ENCODE measurements at regions of chr19 and their contacts with region 1.

Region 1: GRCh38 chr19:39187559-39187957 is 9.2 kb upstream of the NCCRP1 start:
- DNase-seq: no peak
- H3K4me3 ChIP-seq: no peak overlapping the region
- H3K27ac ChIP-seq: no peak overlapping the region
- H3K4me1 ChIP-seq: peaks cover 0 to 3% of the 10 kb centered on the region in 2 experiments; a peak in 1 of 4 replicates
- H3K27me3 ChIP-seq: no peaks in the 10 kb centered on the region
- CTCF ChIP-seq: no peak; the same call in 1 of the 2 replicates
- EP300 ChIP-seq: no peak
- RAD21 ChIP-seq: no peak

Region 2: DNA sequence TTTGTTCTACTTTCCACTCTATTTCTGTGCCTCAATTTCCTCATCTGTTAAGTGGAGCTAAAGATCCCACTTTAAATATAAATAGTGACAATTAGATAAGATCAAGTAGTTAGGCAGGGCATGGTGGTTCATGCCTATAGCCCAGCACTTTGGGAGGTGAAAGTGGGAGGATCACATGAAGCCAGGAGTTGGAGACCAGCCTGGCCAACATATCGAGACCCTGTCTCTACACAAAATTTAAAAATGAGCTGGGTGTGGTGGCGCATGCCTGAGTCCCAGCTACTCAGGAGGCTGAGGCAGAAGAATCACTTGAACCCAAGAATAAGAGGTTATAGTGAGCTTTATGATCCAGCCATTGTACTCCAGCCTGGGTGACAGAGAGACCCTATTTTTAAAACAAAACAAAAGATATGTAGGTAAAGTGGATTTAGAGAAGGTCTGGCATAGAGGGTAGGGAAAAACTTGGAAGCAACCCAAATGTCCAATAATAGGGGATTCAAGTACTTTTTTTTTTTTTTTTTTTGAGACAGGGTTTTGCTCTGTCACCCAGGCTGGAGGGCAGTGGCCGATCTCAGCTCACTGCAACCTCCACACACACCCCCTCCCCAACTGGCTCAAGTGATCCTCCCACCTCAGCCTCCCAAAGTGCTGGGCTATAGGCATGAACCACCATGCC is 67.9 kb before region 1 on chr19:
- CTCF ChIA-PET with region 1: interaction called, 36 read pairs
- POLR2A ChIA-PET with region 1: no interaction called
- DNase-seq: no peak
- H3K4me3 ChIP-seq: no peak overlapping the region
- H3K27ac ChIP-seq: no peak overlapping the region
- H3K4me1 ChIP-seq: no peaks in the 10 kb centered on the region
- H3K27me3 ChIP-seq: no peaks in the 10 kb centered on the region
- CTCF ChIP-seq: no peak
- EP300 ChIP-seq: no peak
- RAD21 ChIP-seq: no peak

Region 3: GRCh38 chr19:39138221-39139211 is 49.0 kb before region 1 on chr19:
- CTCF ChIA-PET with region 1: interaction called, 13 read pairs
- POLR2A ChIA-PET with region 1: no interaction called
- DNase-seq: peak; percentile 29
- H3K4me3 ChIP-seq: no peak overlapping the region
- H3K27ac ChIP-seq: peak overlapping the region in 1 of 2 experiments; percentile 96; a peak in 2 of 4 replicates
- H3K4me1 ChIP-seq: peaks cover 9 to 36% of the 10 kb centered on the region in 2 experiments; a peak in 3 of 4 replicates
- H3K27me3 ChIP-seq: no peaks in the 10 kb centered on the region
- CTCF ChIP-seq: no peak
- EP300 ChIP-seq: no peak
- RAD21 ChIP-seq: no peak

Region 4: GRCh38 chr19:39144245-39145071 is 43.1 kb before region 1 on chr19:
- CTCF ChIA-PET with region 1: interaction called, 16 read pairs
- POLR2A ChIA-PET with region 1: no interaction called
- DNase-seq: peak; percentile 80
- H3K4me3 ChIP-seq: no peak overlapping the region
- H3K27ac ChIP-seq: peak overlapping the region in 1 of 2 experiments; percentile 82; a peak in 2 of 4 replicates
- H3K4me1 ChIP-seq: peaks cover 2 to 43% of the 10 kb centered on the region in 2 experiments; a peak in 3 of 4 replicates
- H3K27me3 ChIP-seq: no peaks in the 10 kb centered on the region
- CTCF ChIP-seq: no peak
- EP300 ChIP-seq: peak in 1 of 2 experiments; percentile 39; a peak in 1 of 4 replicates
- RAD21 ChIP-seq: no peak

Region 5: DNA sequence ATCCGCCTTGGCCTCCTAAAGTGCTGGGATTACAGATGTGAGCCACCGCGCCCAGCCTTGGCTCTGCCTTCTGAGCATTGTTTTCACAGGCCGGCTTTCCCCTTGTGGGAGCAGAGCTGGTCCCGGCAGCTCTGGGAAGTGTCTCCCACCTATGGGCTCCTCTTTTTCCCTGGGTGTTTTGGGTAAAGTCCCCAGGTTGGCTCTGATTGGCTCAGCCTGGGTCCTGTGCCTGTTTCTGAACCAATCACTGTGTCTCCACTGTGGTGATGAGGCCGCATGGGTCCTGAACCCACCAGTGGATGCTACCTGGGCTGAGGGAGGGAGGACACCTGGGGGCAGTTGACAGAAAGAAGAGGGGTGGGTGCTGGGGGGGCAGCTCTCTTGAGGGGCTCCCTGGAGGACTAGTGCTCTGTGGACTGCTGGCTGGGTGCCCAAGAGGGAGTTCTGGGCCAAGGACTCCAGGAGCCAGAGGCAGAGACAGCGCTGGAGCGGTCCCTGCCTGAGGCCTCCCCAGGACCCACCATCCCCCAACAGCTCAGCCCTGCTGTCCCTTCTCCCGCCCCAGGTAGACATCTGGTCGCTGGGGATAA is 10.4 kb before region 1 on chr19:
- CTCF ChIA-PET with region 1: interaction called, 37 read pairs
- POLR2A ChIA-PET with region 1: no interaction called
- DNase-seq: no peak
- H3K4me3 ChIP-seq: no peak overlapping the region
- H3K27ac ChIP-seq: no peak overlapping the region; a peak in 1 of 4 replicates
- H3K4me1 ChIP-seq: peaks cover 0 to 24% of the 10 kb centered on the region in 2 experiments; a peak in 1 of 4 replicates
- H3K27me3 ChIP-seq: no peaks in the 10 kb centered on the region
- CTCF ChIP-seq: no peak
- EP300 ChIP-seq: no peak
- RAD21 ChIP-seq: no peak

Measured in SK-N-SH (cell line).